ENCODE measurements at regions of chr5 and their contacts with region 1.

Region 1: DNA sequence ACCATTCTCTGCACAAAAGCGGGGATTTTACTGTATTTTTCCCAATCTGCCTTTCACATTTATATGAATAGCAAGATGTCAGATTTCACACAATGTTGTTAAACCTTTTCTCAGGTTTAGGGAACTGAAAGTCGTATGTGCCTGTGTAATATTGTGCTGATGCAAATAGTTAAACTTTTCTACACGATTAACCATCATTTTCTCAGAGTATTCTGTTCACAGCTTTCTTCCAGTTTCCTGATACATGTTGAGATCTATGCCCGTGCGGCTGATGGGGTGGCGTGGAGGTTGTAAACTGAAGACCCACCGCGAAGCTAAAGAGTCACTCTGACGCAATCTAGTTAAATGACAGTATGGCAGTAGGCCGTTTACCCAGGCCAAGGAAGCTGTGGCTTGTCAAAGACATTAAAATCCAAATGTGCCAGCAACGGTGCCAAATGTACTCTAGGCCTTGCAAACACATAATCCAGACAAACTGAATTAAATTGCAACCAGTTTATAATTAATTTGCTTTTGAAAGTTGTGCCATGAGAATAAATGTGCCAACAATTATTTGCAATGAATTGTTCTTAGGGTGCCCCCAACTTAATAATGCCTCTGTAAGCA is 145.7 kb downstream of the EBF1 start:
- DNase-seq: peak; percentile 92
- H3K4me3 ChIP-seq: peak overlapping the region; percentile 53
- H3K27ac ChIP-seq: peak overlapping the region; percentile 98
- H3K4me1 ChIP-seq: peaks cover 88% of the 10 kb centered on the region
- CTCF ChIP-seq: no peak

Region 2: DNA sequence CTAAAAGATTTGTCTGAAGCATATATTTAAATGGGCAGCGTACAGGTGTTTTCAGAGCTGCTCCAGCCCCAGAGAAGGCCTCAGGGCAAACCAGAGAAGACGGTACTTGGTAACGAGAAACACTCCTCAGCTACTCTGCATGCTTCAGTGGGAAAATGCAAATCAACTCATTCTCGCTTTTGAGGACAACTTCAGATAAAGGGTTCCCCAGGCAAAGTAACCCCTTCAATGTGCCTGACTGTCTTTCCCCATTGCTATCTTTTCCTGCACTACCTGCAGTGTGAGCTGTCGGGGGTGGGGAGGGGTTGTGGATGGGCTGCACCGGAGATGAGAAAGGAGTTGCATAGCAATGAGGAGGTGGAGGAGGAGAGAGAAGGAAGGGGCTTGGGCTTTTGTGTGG is 755.4 kb before region 1 on chr5:
- CTCF ChIA-PET with region 1: no interaction called
- POLR2A ChIA-PET with region 1: no interaction called
- intact Hi-C with region 1: loop called (anchors 5 kb)
- DNase-seq: peak; percentile 91
- H3K4me3 ChIP-seq: peak overlapping the region; percentile 44
- H3K27ac ChIP-seq: peak overlapping the region; percentile 87
- H3K4me1 ChIP-seq: peaks cover 78% of the 10 kb centered on the region
- CTCF ChIP-seq: no peak

Region 3: DNA sequence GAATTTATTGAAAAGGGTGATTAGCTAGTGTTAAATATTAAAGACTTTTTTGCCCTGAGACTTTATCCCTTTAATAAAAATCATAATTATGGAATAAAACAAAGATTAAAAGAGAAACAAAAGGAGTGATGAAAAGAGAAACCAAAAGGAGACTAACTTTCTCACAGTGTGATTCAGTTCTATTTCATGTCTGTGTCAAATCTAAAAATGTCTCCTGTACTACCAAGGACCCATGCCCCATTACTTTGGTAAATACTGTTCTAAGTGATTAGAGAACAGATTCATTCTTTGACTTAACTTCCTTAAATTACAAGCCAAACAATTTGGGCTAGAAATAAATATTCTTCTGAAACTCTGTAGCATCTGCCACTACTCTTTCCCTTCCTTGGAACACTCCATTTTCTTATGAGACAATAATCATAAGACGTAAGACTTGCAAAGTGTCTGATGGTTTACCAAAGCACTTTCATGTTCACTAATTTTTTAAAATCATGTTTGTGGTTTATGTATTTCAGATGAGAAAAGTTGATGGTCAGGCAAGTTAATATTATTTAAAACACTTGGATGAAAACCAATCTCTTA is 173.3 kb before region 1 on chr5:
- CTCF ChIA-PET with region 1: no interaction called
- POLR2A ChIA-PET with region 1: interaction called, 9 read pairs
- intact Hi-C with region 1: loop called (anchors 5 kb)
- DNase-seq: no peak
- H3K4me3 ChIP-seq: no peak overlapping the region
- H3K27ac ChIP-seq: no peak overlapping the region
- H3K4me1 ChIP-seq: peaks cover 58% of the 10 kb centered on the region
- CTCF ChIP-seq: no peak

Region 4: DNA sequence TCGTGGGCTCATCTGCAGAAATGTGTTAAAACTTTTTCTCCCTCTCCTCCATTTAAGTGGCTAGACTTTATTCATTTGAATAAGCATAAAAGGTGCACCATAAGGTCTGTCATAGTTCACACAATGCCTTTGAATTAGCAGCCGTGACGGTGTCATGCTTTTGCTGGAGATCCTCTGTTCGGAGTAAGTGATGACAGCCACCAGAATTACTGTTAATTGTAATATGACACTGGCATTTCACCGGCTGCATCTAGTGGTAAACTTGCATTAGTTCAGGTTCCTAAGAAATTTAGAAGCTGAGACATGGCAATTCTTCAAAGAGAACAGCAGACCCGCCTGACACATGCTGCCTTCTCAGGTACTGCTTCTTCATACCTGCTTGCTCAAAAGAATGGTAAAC is 96.1 kb before region 1 on chr5:
- CTCF ChIA-PET with region 1: no interaction called
- POLR2A ChIA-PET with region 1: no interaction called
- intact Hi-C with region 1: no loop called
- DNase-seq: no peak
- H3K4me3 ChIP-seq: no peak overlapping the region
- H3K27ac ChIP-seq: no peak overlapping the region
- H3K4me1 ChIP-seq: peaks cover 23% of the 10 kb centered on the region
- CTCF ChIP-seq: no peak

Region 5: DNA sequence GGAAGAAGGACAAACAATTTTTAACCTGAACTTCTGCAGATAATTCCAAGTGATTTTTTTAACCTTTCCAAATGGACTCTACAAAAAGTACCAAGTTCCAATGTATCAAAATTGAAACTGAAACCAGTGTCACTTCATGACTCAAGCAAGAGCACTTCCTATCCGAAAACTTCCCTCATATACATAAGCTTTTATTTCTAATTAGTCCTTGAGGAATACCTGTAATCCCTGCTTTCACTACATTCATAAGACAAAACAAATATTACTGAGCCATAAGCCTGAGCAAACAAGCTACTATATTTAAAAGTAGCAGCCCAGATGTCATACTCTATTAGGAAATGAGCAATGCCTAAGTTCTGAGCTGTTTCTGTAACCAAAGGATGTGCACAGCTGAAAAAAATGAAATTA is 78.8 kb before region 1 on chr5:
- CTCF ChIA-PET with region 1: no interaction called
- POLR2A ChIA-PET with region 1: interaction called, 3 read pairs
- intact Hi-C with region 1: loop called (anchors 2 kb)
- DNase-seq: peak; percentile 57
- H3K4me3 ChIP-seq: peak overlapping the region; percentile 60
- H3K27ac ChIP-seq: peak overlapping the region; percentile 92
- H3K4me1 ChIP-seq: peaks cover 74% of the 10 kb centered on the region
- CTCF ChIP-seq: no peak

Region 6: DNA sequence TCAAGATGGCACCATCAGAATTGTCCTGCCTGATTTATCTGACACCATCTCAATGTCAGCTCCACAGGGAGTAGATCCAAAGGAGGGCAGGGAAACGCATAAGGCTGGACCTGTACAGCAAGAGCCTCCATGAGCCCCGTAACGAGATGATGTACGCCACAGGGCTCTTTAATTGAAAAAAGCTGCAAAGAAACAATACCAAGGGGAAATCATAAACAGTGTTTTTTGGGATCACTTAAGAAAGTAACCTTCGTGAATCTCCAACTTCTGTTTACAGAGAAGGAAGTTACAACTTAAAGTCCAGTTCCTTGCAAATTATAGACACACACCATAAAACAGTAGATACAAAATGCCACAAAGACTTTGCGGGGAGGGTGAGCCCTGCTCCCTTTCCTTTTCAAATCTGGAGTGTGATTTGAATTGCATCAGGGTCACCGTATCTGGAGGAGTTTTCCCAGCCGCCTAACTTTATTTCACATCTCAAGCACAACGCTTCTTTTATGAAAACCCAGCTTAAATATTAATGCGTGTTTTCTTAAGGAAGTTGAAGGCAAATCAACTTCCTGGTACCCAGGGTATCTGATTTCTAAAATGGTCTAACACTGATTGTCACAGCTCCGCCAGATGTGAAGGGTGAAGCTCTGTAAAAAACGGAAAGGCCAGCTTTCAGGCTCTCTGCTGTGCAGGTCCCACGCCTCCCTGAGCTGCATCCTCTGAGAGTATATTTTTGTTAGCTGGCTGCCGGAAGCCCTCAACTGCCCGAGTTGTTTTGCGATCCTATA is 56.8 kb after region 1 on chr5:
- CTCF ChIA-PET with region 1: no interaction called
- POLR2A ChIA-PET with region 1: interaction called, 43 read pairs
- intact Hi-C with region 1: loop called (anchors 1 kb)
- DNase-seq: peak; percentile 95
- H3K4me3 ChIP-seq: peak overlapping the region; percentile 73
- H3K27ac ChIP-seq: peak overlapping the region; percentile 100
- H3K4me1 ChIP-seq: peaks cover 80% of the 10 kb centered on the region
- CTCF ChIP-seq: no peak; the same call in 1 of the 2 replicates

Region 7: DNA sequence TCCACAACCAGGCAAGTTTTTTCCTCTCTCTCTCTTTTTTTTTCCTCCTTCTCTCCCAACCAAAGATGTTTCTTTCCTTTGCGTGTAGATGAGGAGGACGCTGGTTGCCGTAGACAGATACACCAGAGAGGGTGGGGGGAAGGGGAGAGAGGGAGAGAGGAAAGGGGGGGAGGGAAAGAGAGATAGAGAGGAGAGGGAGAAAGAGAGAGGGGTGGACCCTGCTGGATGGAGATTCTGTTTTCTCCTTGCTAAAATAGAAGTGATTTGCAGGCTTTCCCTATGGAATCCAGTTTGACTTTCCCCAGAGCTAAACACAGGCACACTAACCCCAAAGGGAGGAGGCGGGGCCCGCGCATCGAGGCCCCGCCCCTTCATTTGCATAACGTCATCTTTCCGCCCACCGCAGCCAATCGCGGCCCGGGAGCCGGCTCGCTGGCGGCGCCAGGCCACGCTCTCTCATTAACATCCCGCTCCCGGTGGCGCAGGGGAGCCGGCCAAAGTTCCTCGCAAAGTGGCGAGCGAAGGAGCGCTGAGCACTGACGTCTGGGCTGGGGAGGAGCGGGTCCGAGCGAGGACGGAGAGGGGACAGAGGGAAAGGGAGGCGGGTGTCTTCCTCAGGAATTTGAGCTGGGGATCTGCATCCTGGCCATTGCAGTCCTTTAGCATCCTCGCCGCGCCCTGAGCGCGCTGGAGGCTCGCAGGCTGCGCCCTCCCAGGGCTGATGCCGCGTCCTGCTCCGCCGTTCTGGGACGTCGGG is 146.2 kb after region 1 on chr5:
- CTCF ChIA-PET with region 1: interaction called, 3 read pairs
- POLR2A ChIA-PET with region 1: interaction called, 14 read pairs
- intact Hi-C with region 1: loop called (anchors 1 kb)
- DNase-seq: peak; percentile 93
- H3K4me3 ChIP-seq: peak overlapping the region; percentile 94
- H3K27ac ChIP-seq: peak overlapping the region; percentile 90
- H3K4me1 ChIP-seq: peaks cover 50% of the 10 kb centered on the region
- CTCF ChIP-seq: no peak